ENCODE measurements at regions of chr11 and their contacts with region 1.

Region 1: GRCh38 chr11:36702330-36703055 is 104.5 kb upstream of the RAG2 start:
- DNase-seq: no peak
- H3K4me3 ChIP-seq: no peak overlapping the region
- H3K27ac ChIP-seq: no peak overlapping the region
- H3K4me1 ChIP-seq: no peaks in the 10 kb centered on the region
- H3K27me3 ChIP-seq: no peaks in the 10 kb centered on the region
- CTCF ChIP-seq: peak; percentile 70 to 82 (median 76)

Region 2: GRCh38 chr11:36724742-36725385 is 22.4 kb after region 1 on chr11:
- intact Hi-C with region 1: loop called (anchors 2 kb)
- DNase-seq: no peak
- H3K4me3 ChIP-seq: no peak overlapping the region
- H3K27ac ChIP-seq: no peak overlapping the region
- H3K4me1 ChIP-seq: no peaks in the 10 kb centered on the region
- H3K27me3 ChIP-seq: no peaks in the 10 kb centered on the region
- CTCF ChIP-seq: no peak

Region 3: GRCh38 chr11:36736103-36736502 is 33.6 kb after region 1 on chr11:
- intact Hi-C with region 1: no loop called
- DNase-seq: no peak
- H3K4me3 ChIP-seq: no peak overlapping the region
- H3K27ac ChIP-seq: no peak overlapping the region
- H3K4me1 ChIP-seq: no peaks in the 10 kb centered on the region
- H3K27me3 ChIP-seq: no peaks in the 10 kb centered on the region
- CTCF ChIP-seq: no peak